CD14-positive monocyte (primary cell): ENCODE measurements at regions of chr4 and their contacts with region 1.

Region 1: GRCh38 chr4:102500696-102501446 is at the start of gene NFKB1:
- DNase-seq: peak; percentile 95 to 98 (median 95)
- H3K4me3 ChIP-seq: peak within 1 kb of the TSS; percentile 89 to 98 (median 91)
- H3K4me3 Mint-ChIP-seq: peak within 1 kb of the TSS; percentile 96 to 98
- H3K27ac ChIP-seq: peak within 1 kb of the TSS; percentile 99 to 100
- H3K27ac Mint-ChIP-seq: peak within 1 kb of the TSS; percentile 97 to 100 (median 99)
- H3K4me1 ChIP-seq: peaks cover 27 to 38% of the 10 kb centered on the region in 2 donors
- H3K4me1 Mint-ChIP-seq: peaks cover 32% of the 10 kb centered on the region
- H3K27me3 ChIP-seq: no peaks in the 10 kb centered on the region
- H3K27me3 Mint-ChIP-seq: peaks cover 0 to 5% (median 4%) of the 10 kb centered on the region in 3 donors
- CTCF ChIP-seq: no peak
- polyA plus RNA-seq, gene NFKB1: 9.0 to 34.4 (median 17.8) TPM

Region 2: GRCh38 chr4:102525097-102525496 is 24.2 kb after region 1 on chr4:
- intact Hi-C with region 1: loop called (anchors 2 to 5 kb)
- DNase-seq: peak; percentile 78 to 97 (median 94)
- H3K4me3 ChIP-seq: no peak overlapping the region
- H3K4me3 Mint-ChIP-seq: peak overlapping the region in 1 of 2 donors; percentile 31
- H3K27ac ChIP-seq: peak overlapping the region; percentile 61 to 79
- H3K27ac Mint-ChIP-seq: peak overlapping the region; percentile 84 to 93 (median 89)
- H3K4me1 ChIP-seq: peaks cover 11 to 15% of the 10 kb centered on the region in 2 donors
- H3K4me1 Mint-ChIP-seq: peaks cover 27% of the 10 kb centered on the region
- H3K27me3 ChIP-seq: no peaks in the 10 kb centered on the region
- H3K27me3 Mint-ChIP-seq: no peaks in the 10 kb centered on the region
- CTCF ChIP-seq: no peak

Region 3: DNA sequence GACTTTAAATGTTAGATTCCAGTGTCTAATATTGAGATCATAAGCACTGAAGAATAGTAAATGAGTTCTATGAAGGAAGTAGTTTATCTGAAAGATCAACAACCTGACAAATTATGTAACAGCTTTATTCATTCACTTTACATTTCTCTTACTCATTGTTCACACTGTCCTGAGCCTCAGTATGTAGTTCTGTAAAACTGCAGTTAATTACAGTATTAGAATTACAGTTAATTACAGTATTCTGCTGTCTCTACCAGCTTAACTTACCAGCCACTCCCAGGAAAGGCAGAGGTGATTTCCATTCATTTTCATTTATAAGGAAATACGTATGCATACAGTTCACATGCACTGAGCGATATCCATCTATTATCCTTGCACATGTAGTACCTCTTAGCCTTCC is 33.0 kb after region 1 on chr4:
- intact Hi-C with region 1: loop called in 1 of 2 experiments (anchors 5 kb)
- DNase-seq: no peak
- H3K4me3 ChIP-seq: no peak overlapping the region
- H3K4me3 Mint-ChIP-seq: no peak overlapping the region
- H3K27ac ChIP-seq: peak overlapping the region in 1 of 2 donors; percentile 17
- H3K27ac Mint-ChIP-seq: peak overlapping the region in 1 of 7 donors; percentile 25
- H3K4me1 ChIP-seq: no peaks in the 10 kb centered on the region
- H3K4me1 Mint-ChIP-seq: no peaks in the 10 kb centered on the region
- H3K27me3 ChIP-seq: no peaks in the 10 kb centered on the region
- H3K27me3 Mint-ChIP-seq: no peaks in the 10 kb centered on the region
- CTCF ChIP-seq: no peak

Region 4: DNA sequence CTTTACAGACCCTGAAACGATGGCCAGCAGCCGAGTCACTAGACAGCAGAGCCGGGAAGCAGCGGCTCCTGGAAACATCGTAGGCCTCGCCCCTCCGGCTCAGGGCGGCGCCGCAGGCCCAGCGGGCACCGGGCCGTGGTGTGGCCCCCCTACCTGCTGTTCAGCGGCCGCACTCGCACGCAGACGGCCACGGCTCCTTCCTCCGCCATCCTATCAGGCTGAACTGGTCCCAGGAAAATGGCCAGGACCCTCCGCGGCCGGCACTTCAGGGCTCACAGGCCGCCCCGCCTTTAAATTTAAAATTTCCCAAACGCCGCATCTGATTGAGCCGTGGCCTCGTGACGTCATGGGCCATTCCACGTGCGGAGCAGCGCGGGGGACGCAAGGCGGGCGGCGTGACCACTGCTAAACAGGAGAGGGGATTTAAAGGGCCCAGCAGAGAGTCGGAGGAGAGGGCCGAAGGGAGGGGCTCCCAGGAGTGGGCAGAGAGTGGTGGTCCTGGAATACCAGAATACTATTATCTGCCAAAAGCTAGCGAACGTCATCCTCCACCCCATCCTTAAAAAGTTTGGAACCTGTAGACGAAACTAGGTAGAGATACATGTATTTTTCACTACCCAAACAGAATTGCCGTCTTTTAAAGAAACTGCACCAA is 697.4 kb after region 1 on chr4 and contains the start of gene CENPE:
- intact Hi-C with region 1: loop called in 1 of 2 experiments (anchors 5 kb)
- DNase-seq: peak; percentile 71 to 81 (median 80)
- H3K4me3 ChIP-seq: peak within 1 kb of the TSS; percentile 68 to 97 (median 90)
- H3K4me3 Mint-ChIP-seq: peak within 1 kb of the TSS; percentile 86 to 99
- H3K27ac ChIP-seq: peak within 1 kb of the TSS in 1 of 2 donors; percentile 91
- H3K27ac Mint-ChIP-seq: peak within 1 kb of the TSS; percentile 97 to 100 (median 100)
- H3K4me1 ChIP-seq: peaks cover 11 to 14% of the 10 kb centered on the region in 2 donors
- H3K4me1 Mint-ChIP-seq: peaks cover 12% of the 10 kb centered on the region
- H3K27me3 ChIP-seq: no peaks in the 10 kb centered on the region
- H3K27me3 Mint-ChIP-seq: peaks cover 7 to 13% (median 8%) of the 10 kb centered on the region in 3 donors
- CTCF ChIP-seq: no peak
- polyA plus RNA-seq, gene CENPE: 0.03 to 0.17 (median 0.07) TPM